ENCODE measurements at regions of chr7 and their contacts with region 1.

Region 1: GRCh38 chr7:2214636-2215035 is 18.1 kb downstream of the MAD1L1 start:
- DNase-seq: peak; percentile 11
- H3K4me3 ChIP-seq: no peak overlapping the region
- H3K27ac ChIP-seq: no peak overlapping the region
- H3K4me1 ChIP-seq: no peaks in the 10 kb centered on the region
- H3K27me3 ChIP-seq: no peaks in the 10 kb centered on the region

Region 2: DNA sequence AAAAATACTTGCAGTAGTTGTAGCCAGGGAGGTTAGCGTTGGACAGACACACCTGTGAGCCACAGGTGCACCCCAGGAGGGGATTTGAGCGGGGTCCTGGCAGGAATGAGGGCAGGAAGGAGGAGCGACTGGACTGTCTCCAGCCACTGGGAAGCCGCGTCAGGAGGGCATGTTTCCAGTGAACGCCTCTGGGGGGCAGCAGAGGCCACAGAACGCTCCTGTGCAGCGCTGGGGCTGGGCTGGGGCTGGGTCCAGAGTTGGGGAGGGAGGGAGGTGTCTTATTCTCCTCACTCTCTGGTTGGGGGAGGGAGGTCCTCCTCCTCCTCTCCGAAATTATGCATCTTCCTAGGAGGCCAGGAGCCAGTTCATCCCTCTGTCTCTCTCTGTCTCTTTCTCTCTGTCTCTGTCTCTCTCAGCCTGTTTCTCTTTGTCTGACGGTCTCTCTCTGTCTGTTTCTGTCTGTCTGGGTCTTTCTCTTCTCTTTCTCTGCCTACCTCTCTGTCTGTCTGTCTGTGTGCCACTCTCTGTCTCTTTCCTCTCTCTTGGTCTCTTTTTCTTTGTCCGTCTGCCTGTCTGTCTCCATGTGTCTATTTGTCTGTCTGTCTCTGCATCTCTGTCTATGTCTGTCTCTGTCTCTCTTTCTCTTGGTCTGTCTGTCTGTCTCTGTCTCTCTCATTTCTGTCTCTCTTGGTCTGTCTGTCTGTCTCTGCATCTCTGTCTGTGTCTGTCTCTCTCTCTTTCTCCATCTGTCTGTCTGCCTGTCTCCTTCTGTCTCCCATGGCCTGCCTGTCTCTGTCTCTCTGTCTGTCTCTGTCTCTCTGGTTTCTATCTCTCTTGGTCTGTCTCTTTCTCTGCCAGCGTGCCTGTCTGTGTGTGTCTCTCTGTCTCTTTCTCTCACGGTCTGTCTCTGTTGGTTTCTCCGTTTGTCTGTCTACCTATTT is 634.9 kb before region 1 on chr7:
- in situ Hi-C with region 1: loop called (anchors 10 kb)
- DNase-seq: peak; percentile 79
- H3K4me3 ChIP-seq: no peak overlapping the region
- H3K27ac ChIP-seq: no peak overlapping the region
- H3K4me1 ChIP-seq: no peaks in the 10 kb centered on the region
- H3K27me3 ChIP-seq: no peaks in the 10 kb centered on the region

Region 3: DNA sequence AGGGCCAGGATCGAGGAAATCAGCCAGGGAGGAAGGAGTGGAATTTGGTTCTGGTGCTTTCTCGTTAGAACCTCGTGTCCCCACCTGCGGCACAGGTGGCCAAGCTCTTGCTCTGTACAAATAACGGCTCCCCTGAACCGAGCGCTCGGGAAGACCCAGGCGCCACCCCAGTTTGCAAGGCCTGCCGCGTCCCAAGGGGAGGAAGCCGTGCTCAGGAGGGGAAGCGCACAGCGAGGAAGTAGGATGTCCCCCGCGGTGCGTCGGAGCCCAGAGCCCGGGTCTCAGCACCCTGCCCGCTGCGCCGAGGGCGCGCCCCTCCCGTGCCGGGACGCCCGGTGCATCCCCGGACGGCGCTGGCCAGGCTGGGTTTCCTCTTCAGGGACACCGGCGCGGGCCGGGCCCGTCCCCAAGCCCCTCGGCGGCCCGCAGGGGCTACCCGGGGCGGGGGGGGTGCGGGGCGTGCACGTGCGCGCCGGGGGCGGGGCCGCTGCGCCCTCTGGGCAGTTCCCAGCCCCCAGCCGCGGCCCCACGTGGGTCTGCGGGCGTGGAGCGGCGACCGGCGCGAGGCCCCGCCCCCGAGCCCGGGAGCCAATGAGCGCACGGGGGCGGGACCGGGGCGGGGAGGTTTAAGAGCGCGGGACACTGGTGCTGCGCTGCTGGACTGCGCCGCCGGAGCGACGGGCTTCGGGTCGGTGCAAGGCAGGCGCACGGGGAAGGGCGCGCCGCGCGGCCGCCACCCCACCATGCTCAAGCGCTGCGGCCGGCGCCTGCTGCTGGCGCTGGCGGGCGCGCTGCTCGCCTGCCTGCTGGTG is 304.7 kb after region 1 on chr7 and contains the start of gene LFNG:
- in situ Hi-C with region 1: no loop called
- DNase-seq: peak; percentile 94
- H3K4me3 ChIP-seq: peak within 1 kb of the TSS; percentile 69
- H3K27ac ChIP-seq: no peak within 1 kb of the TSS
- H3K4me1 ChIP-seq: peaks cover 38% of the 10 kb centered on the region
- H3K27me3 ChIP-seq: no peaks in the 10 kb centered on the region
- total RNA-seq, gene LFNG: 2.0 and 3.6 TPM in 2 replicates